ENCODE measurements at regions of chr19 and their contacts with region 1.

Region 1: DNA sequence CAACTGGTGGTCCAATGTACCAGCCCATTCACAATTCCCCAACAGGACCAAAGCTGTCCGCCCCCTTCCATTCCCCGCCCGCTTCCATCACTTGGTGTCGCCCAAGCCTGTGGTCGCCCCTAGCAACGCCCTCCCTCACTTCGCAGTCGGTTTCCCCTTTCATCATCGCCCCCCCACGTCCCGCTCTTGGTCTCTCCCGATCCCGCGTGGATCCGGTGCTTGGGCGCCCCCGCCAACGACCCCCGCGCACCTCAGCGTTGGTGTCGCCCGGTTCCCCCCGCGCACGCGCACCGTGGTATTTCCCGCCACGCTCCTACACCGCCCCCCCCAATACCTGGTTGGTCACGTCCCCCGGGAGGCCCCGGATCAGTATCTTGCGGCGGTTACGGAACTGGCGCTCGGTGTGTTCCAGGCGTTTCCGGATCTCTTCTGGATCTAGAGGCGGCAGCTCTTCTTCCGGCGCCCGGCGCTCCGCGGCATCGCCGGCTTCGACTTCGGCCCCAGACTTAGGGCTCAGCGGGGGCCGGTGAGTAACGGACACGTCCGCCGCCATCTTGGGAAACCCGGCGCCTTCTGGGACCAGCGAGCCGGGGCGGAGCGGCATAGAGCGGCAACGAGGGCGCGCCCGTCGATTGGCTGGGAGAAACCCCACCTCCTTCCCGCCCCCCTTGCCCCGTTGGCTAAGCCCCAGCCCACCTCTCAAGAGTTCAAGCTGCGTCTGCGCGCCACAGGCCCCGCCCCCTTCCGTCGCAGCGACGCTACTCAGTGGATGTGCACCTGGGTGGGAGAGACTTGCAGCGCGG is at the start of gene RAVER1:
- DNase-seq: peak; percentile 99
- ATAC-seq: peak; percentile 96
- total RNA-seq, gene RAVER1: 20.3 TPM

Region 2: DNA sequence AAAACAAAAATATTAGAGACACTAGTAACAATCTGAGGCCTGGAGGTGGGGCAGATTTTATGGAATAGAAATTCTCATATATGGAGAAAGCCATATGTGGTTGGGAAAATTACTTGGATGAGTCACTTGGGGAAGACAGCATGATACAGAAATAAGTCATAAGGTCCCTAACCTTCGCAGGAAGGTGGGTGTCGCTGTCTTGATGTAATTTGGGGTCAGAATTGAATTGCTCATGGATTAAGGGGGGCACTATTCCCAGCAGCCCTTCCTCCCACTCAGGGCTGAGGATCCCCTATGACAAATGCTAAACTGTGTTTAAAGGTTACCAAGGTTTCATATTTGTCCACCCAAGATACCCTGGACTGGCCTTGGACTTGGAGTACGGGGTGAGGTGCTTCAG is 314.9 kb before region 1 on chr19:
- intact Hi-C with region 1: no loop called
- DNase-seq: no peak
- ATAC-seq: no peak

Region 3: GRCh38 chr19:10315335-10316214 is 17.6 kb before region 1 on chr19 and contains the start of gene FDX2:
- intact Hi-C with region 1: loop called (anchors 2 kb)
- DNase-seq: peak; percentile 94
- ATAC-seq: peak; percentile 94
- total RNA-seq, gene FDX2: 15.2 TPM